ENCODE measurements at regions of chr3 and their contacts with region 1.

Region 1: DNA sequence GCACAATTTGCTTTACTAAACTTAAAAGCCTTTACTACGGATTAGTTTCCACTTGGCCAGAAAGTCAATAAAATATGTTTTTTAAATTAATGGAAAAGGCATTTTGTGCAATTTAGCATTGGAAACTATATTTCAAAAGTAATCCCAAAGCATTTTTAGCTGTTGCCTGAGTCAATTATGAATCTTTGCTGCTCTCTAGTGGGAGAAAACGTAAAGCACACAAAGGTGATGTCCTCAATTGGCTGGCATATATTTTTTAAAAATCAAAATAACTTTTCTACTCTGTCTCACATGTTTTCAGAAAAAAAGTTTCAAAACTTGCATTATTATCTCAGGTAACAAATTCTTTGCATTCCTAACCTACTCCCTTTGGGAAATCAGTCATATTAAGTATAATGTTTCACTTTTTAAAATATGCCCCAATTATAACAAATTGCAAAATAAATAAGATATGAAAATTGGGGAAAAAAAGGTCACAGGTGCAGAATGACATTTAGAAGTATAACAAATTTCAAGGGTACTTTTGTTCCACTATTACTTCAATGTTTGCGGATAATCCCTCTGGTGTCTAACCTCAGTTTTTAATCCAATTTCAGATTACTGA is 47.2 kb upstream of the TEX55 start:
- DNase-seq: peak in 4 of 5 donors; percentile 35 to 58 (median 42)
- H3K4me3 ChIP-seq: no peak overlapping the region
- H3K4me3 Mint-ChIP-seq: no peak overlapping the region
- H3K27ac ChIP-seq: no peak overlapping the region
- H3K27ac Mint-ChIP-seq: no peak overlapping the region
- H3K4me1 ChIP-seq: no peaks in the 10 kb centered on the region
- H3K4me1 Mint-ChIP-seq: no peaks in the 10 kb centered on the region
- H3K27me3 ChIP-seq: no peaks in the 10 kb centered on the region
- H3K27me3 Mint-ChIP-seq: peaks cover 0 to 2% of the 10 kb centered on the region in 2 donors

Region 2: GRCh38 chr3:118955914-118956556 is 142.7 kb before region 1 on chr3:
- CTCF ChIA-PET with region 1: no interaction called
- POLR2A ChIA-PET with region 1: no interaction called
- intact Hi-C with region 1: loop called (anchors 5 kb)
- DNase-seq: peak in 4 of 5 donors; percentile 50 to 57 (median 52)
- H3K4me3 ChIP-seq: no peak overlapping the region
- H3K4me3 Mint-ChIP-seq: peak overlapping the region; percentile 2 to 62 (median 55)
- H3K27ac ChIP-seq: no peak overlapping the region
- H3K27ac Mint-ChIP-seq: peak overlapping the region; percentile 25 to 90 (median 70)
- H3K4me1 ChIP-seq: peaks cover 39% of the 10 kb centered on the region
- H3K4me1 Mint-ChIP-seq: peaks cover 22 to 46% (median 37%) of the 10 kb centered on the region in 4 donors
- H3K27me3 ChIP-seq: no peaks in the 10 kb centered on the region
- H3K27me3 Mint-ChIP-seq: no peaks in the 10 kb centered on the region

Region 3: DNA sequence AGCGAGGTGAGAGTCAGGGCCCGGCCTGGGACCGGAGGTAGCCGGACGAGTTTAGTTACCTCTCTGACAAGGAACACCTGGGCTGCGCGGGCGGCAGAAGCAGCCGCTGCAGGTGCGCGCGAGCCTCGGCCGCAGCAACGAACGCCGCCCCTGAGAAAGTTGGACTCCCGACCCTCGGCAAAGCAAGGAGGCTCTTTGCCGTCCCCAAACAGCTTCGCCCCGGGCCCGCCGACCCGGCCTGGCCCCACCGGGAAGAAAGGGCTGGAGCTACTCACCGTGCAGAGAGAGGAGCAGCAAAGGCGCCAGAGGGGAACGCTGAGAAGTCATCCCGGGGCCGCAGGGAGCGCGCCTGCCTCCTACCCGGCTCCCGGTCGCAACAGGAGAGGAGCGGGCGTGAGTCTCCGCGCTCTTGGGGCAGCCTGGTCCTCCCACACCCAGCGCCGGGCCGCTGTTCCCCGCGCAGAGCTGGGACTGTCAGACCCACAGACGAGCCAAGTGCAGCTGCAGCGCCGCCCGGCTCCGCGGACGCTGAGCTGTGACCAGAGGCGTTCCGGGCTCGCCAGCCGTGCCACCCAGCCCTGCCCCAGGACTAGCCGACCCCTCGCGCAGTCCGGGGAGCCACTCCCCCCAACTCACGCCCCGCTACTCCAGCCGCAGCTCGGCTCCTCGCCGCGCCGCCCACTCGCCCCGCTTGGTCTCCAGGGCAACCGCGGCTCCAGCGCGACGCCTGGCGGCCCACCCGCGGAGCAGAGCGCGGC is 64.3 kb before region 1 on chr3 and contains the start of gene IGSF11:
- CTCF ChIA-PET with region 1: interaction called, 27 read pairs
- POLR2A ChIA-PET with region 1: no interaction called
- intact Hi-C with region 1: loop called (anchors 1 kb)
- DNase-seq: peak; percentile 47 to 68 (median 62)
- H3K4me3 ChIP-seq: peak within 1 kb of the TSS in 1 of 2 donors; percentile 51
- H3K4me3 Mint-ChIP-seq: peak within 1 kb of the TSS; percentile 81 to 93 (median 86)
- H3K27ac ChIP-seq: no peak within 1 kb of the TSS
- H3K27ac Mint-ChIP-seq: peak within 1 kb of the TSS in 1 of 7 donors; percentile 43
- H3K4me1 ChIP-seq: peaks cover 4% of the 10 kb centered on the region
- H3K4me1 Mint-ChIP-seq: peaks cover 0 to 11% (median 4%) of the 10 kb centered on the region in 4 donors
- H3K27me3 ChIP-seq: peaks cover 15% of the 10 kb centered on the region
- H3K27me3 Mint-ChIP-seq: peaks cover 19 to 36% of the 10 kb centered on the region in 2 donors
- total RNA-seq, gene IGSF11: 0.22 to 0.44 TPM

Region 4: DNA sequence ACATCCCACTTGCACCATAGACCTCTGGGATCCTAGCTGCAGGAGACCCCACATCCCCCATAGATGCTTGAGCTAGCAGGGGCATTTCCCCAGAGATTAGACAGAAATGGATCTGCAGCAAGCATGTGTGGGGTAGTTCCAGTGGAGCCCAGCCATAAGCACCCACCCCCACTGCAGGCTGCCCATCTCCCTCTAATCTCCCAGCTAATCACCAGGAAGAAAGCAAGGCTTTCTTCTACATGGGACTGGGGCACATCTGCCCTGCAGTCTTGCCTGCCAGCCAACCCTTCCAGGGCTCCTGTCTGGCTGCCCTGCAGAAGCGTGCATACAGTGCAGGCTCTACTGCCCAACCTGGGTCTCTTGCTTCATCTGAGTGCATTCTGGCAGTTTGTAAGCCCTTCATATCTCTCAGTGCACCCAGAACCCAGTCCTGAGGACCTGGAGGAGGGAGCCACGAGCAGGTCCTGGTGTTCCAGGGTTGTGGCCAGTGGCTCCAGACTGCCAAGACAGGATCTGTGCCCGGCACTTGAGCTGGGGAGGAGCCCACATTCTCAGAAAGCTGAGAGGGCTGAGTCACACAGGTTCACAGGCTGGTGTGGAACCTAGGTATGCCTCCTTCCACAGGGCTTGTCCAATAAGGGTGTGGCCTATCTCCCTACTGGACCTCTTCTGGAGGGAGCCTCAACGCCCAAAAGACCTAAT is 14.2 kb before region 1 on chr3:
- CTCF ChIA-PET with region 1: interaction called, 12 read pairs
- POLR2A ChIA-PET with region 1: no interaction called
- intact Hi-C with region 1: no loop called
- DNase-seq: no peak
- H3K4me3 ChIP-seq: no peak overlapping the region
- H3K4me3 Mint-ChIP-seq: no peak overlapping the region
- H3K27ac ChIP-seq: no peak overlapping the region
- H3K27ac Mint-ChIP-seq: no peak overlapping the region
- H3K4me1 ChIP-seq: no peaks in the 10 kb centered on the region
- H3K4me1 Mint-ChIP-seq: peaks cover 0 to 2% (median 0%) of the 10 kb centered on the region in 4 donors
- H3K27me3 ChIP-seq: no peaks in the 10 kb centered on the region
- H3K27me3 Mint-ChIP-seq: peaks cover 0 to 3% of the 10 kb centered on the region in 2 donors

Region 5: GRCh38 chr3:119310071-119310470 is 211.3 kb after region 1 on chr3:
- CTCF ChIA-PET with region 1: no interaction called
- POLR2A ChIA-PET with region 1: no interaction called
- intact Hi-C with region 1: no loop called
- DNase-seq: no peak
- H3K4me3 ChIP-seq: no peak overlapping the region
- H3K4me3 Mint-ChIP-seq: no peak overlapping the region
- H3K27ac ChIP-seq: no peak overlapping the region
- H3K27ac Mint-ChIP-seq: peak overlapping the region in 1 of 7 donors; percentile 70
- H3K4me1 ChIP-seq: no peaks in the 10 kb centered on the region
- H3K4me1 Mint-ChIP-seq: peaks cover 5 to 19% (median 11%) of the 10 kb centered on the region in 4 donors
- H3K27me3 ChIP-seq: no peaks in the 10 kb centered on the region
- H3K27me3 Mint-ChIP-seq: no peaks in the 10 kb centered on the region

Measured in CD4-positive, alpha-beta memory T cell (primary cell).